Cardiac septum (tissue), 1 donor: ENCODE measurements at regions of chr5 and their contacts with region 1.

Region 1: GRCh38 chr5:31680528-31680927 is 41.6 kb downstream of the PDZD2 start:
- DNase-seq: peak; percentile 81

Region 2: DNA sequence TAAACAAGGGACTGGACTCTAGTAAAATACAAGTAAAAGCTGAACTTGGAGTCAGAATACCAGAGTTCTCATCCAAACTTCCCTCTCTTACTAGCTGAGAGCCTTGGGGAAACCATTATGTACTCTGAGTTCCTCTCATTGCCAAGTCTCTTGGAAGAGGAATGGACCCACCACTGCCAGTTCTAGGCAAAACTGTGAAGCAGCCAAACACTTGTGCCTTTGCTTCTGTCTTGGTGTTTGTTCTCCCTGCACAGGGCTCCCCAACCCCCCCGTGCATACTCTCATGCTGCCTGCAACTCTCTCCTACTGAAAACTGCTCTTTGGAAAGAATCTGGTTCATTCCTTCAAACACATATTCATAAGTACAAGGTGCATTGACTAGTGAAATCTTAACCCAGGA is 61.0 kb after region 1 on chr5:
- intact Hi-C with region 1: loop called (anchors 5 kb)
- DNase-seq: no peak